ENCODE measurements at regions of chr2 and their contacts with region 1.

Region 1: DNA sequence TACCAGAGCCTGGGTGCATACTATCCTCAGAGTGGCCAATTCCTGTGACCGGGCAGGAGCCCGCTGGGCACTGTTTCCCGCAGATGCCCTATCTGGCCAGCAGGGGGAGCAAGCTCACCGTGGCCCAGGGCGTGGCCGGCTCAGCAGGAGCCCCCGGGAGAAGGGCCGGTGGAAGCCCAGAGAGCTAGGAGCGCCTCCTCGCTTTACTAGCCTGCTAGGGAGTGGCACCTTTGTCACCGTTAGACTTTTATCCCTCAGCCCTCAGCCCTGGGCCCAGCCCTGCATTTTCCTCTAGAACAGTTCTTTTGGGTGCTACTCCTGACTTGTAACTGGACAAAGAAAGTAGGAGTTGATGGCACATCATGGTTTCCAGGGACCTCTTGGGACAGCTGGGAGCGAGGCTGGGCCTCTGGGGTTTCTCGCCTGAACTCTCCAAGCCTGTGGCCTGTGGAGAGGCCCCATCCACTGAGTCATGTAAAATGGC is 24.0 kb downstream of the TMEM177 start:
- DNase-seq: peak; percentile 56 to 80
- H3K4me3 ChIP-seq: no peak overlapping the region
- H3K27ac ChIP-seq: no peak overlapping the region
- H3K4me1 ChIP-seq: no peaks in the 10 kb centered on the region
- H3K27me3 ChIP-seq: no peaks in the 10 kb centered on the region
- CTCF ChIP-seq: peak; percentile 100

Region 2: DNA sequence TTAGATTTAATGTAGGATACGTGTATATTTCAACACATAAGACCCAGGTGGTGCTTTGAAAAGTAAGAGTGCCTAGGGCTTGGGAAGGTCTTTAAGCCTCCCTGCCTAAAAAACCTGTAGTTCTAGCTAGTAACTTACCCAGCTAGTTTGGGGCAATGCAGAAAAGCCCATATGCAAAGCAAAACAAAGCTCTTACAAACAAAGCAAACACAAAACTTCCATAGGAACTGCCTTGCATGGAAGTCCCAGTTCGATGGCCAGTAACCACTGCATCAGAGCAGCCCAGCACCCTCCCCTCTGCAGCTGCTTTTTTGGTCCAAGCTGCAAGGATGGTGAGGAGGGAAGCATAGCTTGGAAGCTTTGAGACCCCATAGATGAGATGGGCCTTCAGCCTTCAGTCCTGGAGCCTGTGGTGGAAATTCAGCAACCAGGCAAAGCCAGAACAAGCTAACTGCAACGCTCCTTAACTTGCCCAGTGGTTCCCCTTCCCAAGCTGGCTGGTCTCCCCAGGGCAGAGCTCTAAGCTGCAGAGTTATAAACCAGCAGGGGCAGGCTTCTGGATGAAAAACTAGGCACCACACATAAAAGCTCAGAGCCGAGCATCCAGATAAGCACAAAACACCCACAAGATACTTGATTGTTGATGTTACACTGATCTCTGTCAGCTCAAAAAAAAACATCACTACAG is 352.5 kb before region 1 on chr2:
- CTCF ChIA-PET with region 1: no interaction called
- POLR2A ChIA-PET with region 1: no interaction called
- intact Hi-C with region 1: no loop called
- DNase-seq: no peak
- H3K4me3 ChIP-seq: no peak overlapping the region
- H3K27ac ChIP-seq: no peak overlapping the region
- H3K4me1 ChIP-seq: peaks cover 4% of the 10 kb centered on the region; the same call in 1 of the 2 replicates
- H3K27me3 ChIP-seq: no peaks in the 10 kb centered on the region
- CTCF ChIP-seq: no peak

Region 3: GRCh38 chr2:119565481-119565880 is 137.5 kb before region 1 on chr2:
- CTCF ChIA-PET with region 1: no interaction called
- POLR2A ChIA-PET with region 1: no interaction called
- intact Hi-C with region 1: no loop called
- DNase-seq: no peak
- H3K4me3 ChIP-seq: no peak overlapping the region
- H3K27ac ChIP-seq: no peak overlapping the region
- H3K4me1 ChIP-seq: no peaks in the 10 kb centered on the region
- H3K27me3 ChIP-seq: no peaks in the 10 kb centered on the region
- CTCF ChIP-seq: no peak

Region 4: GRCh38 chr2:119744298-119744939 is 41.5 kb after region 1 on chr2:
- CTCF ChIA-PET with region 1: interaction called, 3 read pairs
- POLR2A ChIA-PET with region 1: no interaction called
- intact Hi-C with region 1: loop called (anchors 2 kb)
- DNase-seq: peak; percentile 70 to 93
- H3K4me3 ChIP-seq: no peak overlapping the region
- H3K27ac ChIP-seq: no peak overlapping the region
- H3K4me1 ChIP-seq: peaks cover 35% of the 10 kb centered on the region
- H3K27me3 ChIP-seq: no peaks in the 10 kb centered on the region
- CTCF ChIP-seq: no peak

Region 5: GRCh38 chr2:119897736-119898395 is 194.9 kb after region 1 on chr2:
- CTCF ChIA-PET with region 1: no interaction called
- POLR2A ChIA-PET with region 1: no interaction called
- intact Hi-C with region 1: loop called (anchors 10 kb)
- DNase-seq: no peak
- H3K4me3 ChIP-seq: no peak overlapping the region
- H3K27ac ChIP-seq: no peak overlapping the region
- H3K4me1 ChIP-seq: no peaks in the 10 kb centered on the region
- H3K27me3 ChIP-seq: no peaks in the 10 kb centered on the region
- CTCF ChIP-seq: no peak

Region 6: DNA sequence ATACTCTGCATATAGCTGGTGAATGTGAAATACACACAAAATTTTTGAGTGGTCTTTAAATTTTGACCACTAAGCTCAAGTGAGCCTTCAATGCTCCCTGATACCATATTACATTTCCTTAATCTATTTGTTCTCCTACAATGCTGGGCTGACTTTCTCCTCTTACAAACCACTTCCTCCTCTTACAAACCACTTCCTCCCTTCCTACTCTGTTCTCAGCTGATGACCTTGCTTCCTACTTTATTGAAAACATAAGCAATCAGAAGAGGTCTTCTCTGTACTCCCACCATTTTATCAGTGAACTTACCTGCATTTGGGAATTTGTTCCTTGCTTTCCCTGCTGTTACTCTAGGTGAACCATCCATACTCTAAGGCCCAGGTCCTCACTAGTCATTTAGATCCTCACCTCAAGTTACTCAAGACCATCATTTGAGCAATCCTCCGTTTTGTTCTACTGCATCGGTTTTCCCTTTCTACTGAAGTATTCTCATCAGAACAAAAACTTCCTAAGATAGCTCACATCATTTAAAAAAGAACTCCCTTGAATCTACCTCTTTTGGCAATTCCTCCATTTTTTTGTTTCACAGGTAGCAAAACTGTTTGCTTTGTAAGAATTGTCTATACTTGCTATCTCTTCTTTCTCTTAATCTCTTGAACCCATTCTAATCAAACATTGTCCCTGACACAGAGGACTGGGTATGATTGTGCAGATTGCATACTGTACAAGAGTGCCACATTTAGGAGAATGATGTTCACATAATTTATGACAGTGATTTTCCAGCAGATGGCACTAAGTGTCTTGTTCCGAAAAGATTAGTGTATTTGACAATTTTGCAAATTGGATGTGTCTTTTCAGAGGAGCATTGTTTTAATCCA is 406.5 kb after region 1 on chr2:
- CTCF ChIA-PET with region 1: no interaction called
- POLR2A ChIA-PET with region 1: no interaction called
- intact Hi-C with region 1: loop called (anchors 2 kb)
- DNase-seq: peak in 1 of 2 experiments; percentile 54
- H3K4me3 ChIP-seq: no peak overlapping the region
- H3K27ac ChIP-seq: no peak overlapping the region
- H3K4me1 ChIP-seq: peaks cover 32% of the 10 kb centered on the region
- H3K27me3 ChIP-seq: no peaks in the 10 kb centered on the region
- CTCF ChIP-seq: peak; percentile 73

Measured in PC-9 (cell line).